Transverse colon (tissue), 4 donors: ENCODE measurements at regions of chr14 and their contacts with region 1.

Region 1: DNA sequence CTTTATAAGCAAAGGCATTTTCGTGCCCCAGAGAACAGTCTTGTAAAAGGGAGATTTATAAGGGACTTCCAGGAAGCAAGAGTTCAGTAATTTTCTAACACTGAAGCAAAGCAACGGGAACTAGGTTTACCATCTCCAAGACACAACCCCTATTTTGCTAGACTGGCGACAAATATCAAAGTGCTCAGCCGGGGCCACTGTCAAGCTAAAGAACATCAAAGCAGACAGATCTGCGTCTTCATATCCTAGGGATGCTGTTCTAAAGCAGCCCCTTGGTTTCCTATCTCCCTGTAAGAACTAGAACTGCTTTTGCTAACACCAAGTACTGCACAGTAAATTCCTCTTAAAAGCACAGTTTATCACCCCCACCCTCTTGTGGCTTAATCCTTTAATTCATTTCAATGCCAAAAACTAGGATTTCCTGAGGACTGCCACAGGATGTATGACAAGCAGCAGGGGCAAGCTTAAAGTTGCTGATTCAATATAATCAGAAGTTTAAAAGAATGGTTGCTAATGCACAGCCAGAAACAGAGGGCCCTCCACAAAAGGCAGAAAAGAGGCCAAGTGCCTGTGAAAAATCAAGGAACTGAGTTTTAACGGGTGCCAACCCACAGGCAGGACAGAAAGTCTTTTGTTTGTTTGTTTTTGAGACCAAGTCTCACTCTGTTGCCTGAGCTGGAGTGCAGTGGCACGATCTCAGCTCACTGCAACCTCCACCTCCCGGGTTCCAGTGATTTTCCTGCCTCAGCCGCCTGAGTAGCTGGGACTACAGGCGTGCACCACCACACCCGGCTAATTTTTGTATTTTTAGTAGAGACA is 44.0 kb upstream of the ISM2 start:
- DNase-seq: no peak
- H3K4me3 ChIP-seq: no peak overlapping the region
- H3K27ac ChIP-seq: peak overlapping the region; percentile 33 to 63 (median 58)
- H3K4me1 ChIP-seq: peaks cover 3 to 17% (median 11%) of the 10 kb centered on the region in 4 donors
- H3K27me3 ChIP-seq: no peaks in the 10 kb centered on the region
- CTCF ChIP-seq: no peak
- EP300 ChIP-seq: no peak
- POLR2A ChIP-seq: no peak

Region 2: GRCh38 chr14:77469539-77469938 is 73.1 kb before region 1 on chr14:
- in situ Hi-C with region 1: loop called in 1 of 4 experiments (anchors 10 kb)
- intact Hi-C with region 1: no loop called
- DNase-seq: no peak
- H3K4me3 ChIP-seq: no peak overlapping the region
- H3K27ac ChIP-seq: peak overlapping the region; percentile 34 to 62 (median 49)
- H3K4me1 ChIP-seq: peaks cover 0 to 11% (median 0%) of the 10 kb centered on the region in 4 donors
- H3K27me3 ChIP-seq: no peaks in the 10 kb centered on the region
- CTCF ChIP-seq: no peak
- EP300 ChIP-seq: no peak
- POLR2A ChIP-seq: no peak